ENCODE measurements at regions of chr3 and their contacts with region 1.

Region 1: GRCh38 chr3:31531992-31532586 is 636 bp upstream of the STT3B start:
- DNase-seq: peak; percentile 99
- H3K4me3 ChIP-seq: peak overlapping the region; percentile 76
- H3K4me3 Mint-ChIP-seq: peak overlapping the region in 6 of 7 donors; percentile 93 to 100 (median 96)
- H3K27ac ChIP-seq: peak overlapping the region; percentile 83
- H3K27ac Mint-ChIP-seq: peak overlapping the region; percentile 96 to 98 (median 96)
- H3K4me1 ChIP-seq: peaks cover 12% of the 10 kb centered on the region
- H3K4me1 Mint-ChIP-seq: peaks cover 28 to 38% (median 35%) of the 10 kb centered on the region in 3 donors
- H3K27me3 ChIP-seq: no peaks in the 10 kb centered on the region
- H3K27me3 Mint-ChIP-seq: peaks cover 0 to 4% of the 10 kb centered on the region in 2 donors

Region 2: DNA sequence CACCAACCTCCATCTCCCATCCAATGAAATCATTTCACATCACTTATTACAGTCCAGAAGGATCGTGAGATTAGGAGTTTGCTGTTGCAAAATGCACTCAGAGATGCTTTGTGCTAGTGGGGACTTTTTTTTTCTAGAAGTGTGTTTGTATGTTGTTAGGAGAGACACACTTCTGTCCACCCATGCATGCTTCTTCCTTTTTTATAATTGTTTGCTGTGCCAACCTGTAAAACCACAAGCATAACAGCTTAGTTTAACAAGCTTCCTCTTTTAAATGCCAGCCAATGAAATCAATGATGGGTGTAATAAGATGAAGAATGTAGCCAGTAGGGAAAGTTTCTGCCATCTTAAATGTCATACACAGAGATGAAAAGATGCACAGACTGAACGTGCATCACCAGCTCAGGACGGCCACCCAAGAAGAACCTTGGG is 304.9 kb before region 1 on chr3:
- CTCF ChIA-PET with region 1: interaction called, 10 read pairs
- POLR2A ChIA-PET with region 1: interaction called, 21 read pairs
- DNase-seq: peak in 2 of 5 donors; percentile 50 to 71
- H3K4me3 ChIP-seq: peak overlapping the region; percentile 7
- H3K4me3 Mint-ChIP-seq: peak overlapping the region; percentile 8 to 82 (median 73)
- H3K27ac ChIP-seq: peak overlapping the region; percentile 40
- H3K27ac Mint-ChIP-seq: peak overlapping the region; percentile 83 to 97 (median 89)
- H3K4me1 ChIP-seq: peaks cover 91% of the 10 kb centered on the region
- H3K4me1 Mint-ChIP-seq: peaks cover 77 to 91% (median 88%) of the 10 kb centered on the region in 3 donors
- H3K27me3 ChIP-seq: no peaks in the 10 kb centered on the region
- H3K27me3 Mint-ChIP-seq: no peaks in the 10 kb centered on the region

Region 3: DNA sequence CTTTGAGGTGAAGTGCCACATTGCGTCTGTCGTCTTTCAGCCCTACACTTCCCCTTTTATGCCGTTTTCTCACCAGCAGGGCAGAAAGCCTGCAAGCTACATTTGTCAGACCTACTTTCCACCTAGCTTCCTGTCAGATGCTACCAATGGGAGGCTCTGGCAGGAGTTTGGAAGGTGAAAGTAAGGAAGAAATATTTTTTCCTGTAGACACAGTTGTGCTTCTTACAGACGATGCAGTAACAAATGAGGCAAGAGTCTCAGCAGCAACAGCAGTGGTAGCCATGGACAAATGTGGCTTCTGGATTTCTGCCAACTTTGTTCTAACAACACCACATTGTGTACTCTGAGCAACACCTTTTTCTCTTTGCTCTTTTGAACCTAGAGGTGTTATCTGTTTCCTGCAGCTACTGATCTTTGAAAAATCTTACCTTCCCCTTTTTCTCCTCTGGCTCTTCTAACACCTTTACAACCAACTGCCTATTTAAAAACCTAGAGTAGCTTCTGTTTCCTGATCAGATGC is 70.0 kb before region 1 on chr3:
- CTCF ChIA-PET with region 1: interaction called, 46 read pairs
- POLR2A ChIA-PET with region 1: interaction called, 32 read pairs
- DNase-seq: peak; percentile 11 to 88 (median 78)
- H3K4me3 ChIP-seq: peak overlapping the region; percentile 32
- H3K4me3 Mint-ChIP-seq: peak overlapping the region; percentile 55 to 82 (median 76)
- H3K27ac ChIP-seq: no peak overlapping the region
- H3K27ac Mint-ChIP-seq: peak overlapping the region; percentile 87 to 95 (median 92)
- H3K4me1 ChIP-seq: peaks cover 59% of the 10 kb centered on the region
- H3K4me1 Mint-ChIP-seq: peaks cover 52 to 73% (median 68%) of the 10 kb centered on the region in 3 donors
- H3K27me3 ChIP-seq: no peaks in the 10 kb centered on the region
- H3K27me3 Mint-ChIP-seq: no peaks in the 10 kb centered on the region

Region 4: DNA sequence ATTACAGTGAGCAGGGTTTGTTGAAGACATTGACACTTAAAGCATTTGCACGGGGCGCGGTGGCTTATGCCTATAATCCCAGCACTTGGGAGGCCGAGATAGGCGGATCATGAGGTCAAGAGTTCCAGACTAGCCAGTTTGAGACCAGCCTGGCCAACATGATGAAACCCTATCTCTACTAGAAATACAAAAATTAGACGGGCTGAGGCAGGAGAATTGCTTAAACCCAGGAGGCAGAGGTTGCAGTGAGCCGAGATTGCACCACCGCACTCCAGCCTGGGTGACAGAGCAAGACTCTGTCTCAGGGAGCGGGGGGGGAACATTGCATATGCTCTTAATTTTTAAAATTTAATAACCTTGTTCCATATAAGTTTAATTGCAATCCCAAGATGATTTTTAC is 12.5 kb after region 1 on chr3:
- CTCF ChIA-PET with region 1: interaction called, 23 read pairs
- POLR2A ChIA-PET with region 1: interaction called, 5 read pairs
- DNase-seq: no peak
- H3K4me3 ChIP-seq: no peak overlapping the region
- H3K4me3 Mint-ChIP-seq: peak overlapping the region in 5 of 7 donors; percentile 11 to 46 (median 18)
- H3K27ac ChIP-seq: no peak overlapping the region
- H3K27ac Mint-ChIP-seq: peak overlapping the region in 4 of 8 donors; percentile 19 to 59 (median 33)
- H3K4me1 ChIP-seq: peaks cover 49% of the 10 kb centered on the region
- H3K4me1 Mint-ChIP-seq: peaks cover 80 to 94% (median 92%) of the 10 kb centered on the region in 3 donors
- H3K27me3 ChIP-seq: no peaks in the 10 kb centered on the region
- H3K27me3 Mint-ChIP-seq: no peaks in the 10 kb centered on the region

Region 5: DNA sequence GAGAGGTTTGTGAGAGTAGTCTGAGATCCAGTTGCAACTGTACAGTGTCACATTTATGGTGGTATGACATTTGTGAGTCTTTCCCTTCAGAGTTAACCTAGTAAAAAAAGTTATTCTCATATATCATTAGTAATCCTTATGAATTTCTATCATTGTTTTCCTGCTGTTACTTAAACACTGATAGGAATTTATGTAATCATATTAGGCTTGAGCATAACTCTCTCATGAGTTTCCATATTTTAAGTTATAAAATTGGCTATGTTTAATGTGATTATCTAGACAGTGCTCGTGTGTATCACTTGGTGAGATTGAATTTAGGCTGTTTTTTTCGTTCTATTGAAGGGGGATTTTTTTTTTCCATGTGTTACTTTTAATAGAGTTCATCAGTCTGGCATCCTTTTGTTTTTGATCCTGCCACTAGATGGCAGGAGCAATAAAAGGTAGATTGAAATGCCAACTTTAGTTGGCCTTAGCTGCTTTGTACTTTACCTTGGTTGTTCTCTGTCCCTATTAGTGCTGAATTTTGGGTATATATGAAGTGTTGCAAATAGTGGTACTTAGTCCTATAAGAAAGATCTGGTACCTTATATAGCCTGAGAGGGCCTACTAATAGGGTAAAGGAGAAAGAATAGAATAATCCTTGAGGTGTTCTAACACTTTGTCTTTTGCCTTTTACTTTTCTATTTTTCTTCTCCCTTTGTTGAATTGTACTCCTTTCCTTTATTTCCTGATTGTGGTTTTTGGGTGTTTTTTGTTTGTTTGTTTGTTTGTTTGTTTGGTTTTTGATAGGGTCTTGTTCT is 18.6 kb after region 1 on chr3:
- CTCF ChIA-PET with region 1: interaction called, 23 read pairs
- POLR2A ChIA-PET with region 1: interaction called, 5 read pairs
- DNase-seq: peak in 2 of 5 donors; percentile 21 to 31
- H3K4me3 ChIP-seq: no peak overlapping the region
- H3K4me3 Mint-ChIP-seq: peak overlapping the region in 6 of 7 donors; percentile 1 to 54 (median 11)
- H3K27ac ChIP-seq: no peak overlapping the region
- H3K27ac Mint-ChIP-seq: peak overlapping the region in 7 of 8 donors; percentile 1 to 94 (median 20)
- H3K4me1 ChIP-seq: peaks cover 38% of the 10 kb centered on the region
- H3K4me1 Mint-ChIP-seq: peaks cover 73 to 93% (median 91%) of the 10 kb centered on the region in 3 donors
- H3K27me3 ChIP-seq: no peaks in the 10 kb centered on the region
- H3K27me3 Mint-ChIP-seq: no peaks in the 10 kb centered on the region

Region 6: DNA sequence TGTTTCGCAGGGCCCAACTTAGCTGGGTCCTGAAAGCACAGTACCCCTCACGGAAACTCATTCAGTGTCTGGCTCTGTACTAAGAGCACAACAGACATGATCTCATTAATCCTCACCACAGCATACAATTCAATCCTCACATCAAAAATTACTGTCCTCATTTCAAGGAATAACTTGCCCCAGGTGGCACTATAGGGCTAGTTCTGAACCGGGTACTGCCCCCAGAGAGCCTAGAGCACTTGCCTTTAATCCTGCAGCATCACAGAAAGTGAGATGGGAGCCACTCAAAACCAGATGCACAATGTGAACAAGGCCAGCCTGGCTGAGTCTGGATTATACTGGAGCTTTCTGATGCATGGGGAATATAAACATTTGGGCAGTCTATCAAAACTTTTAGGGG is 326.4 kb after region 1 on chr3:
- CTCF ChIA-PET with region 1: no interaction called
- POLR2A ChIA-PET with region 1: no interaction called
- DNase-seq: no peak
- H3K4me3 ChIP-seq: no peak overlapping the region
- H3K4me3 Mint-ChIP-seq: no peak overlapping the region
- H3K27ac ChIP-seq: no peak overlapping the region
- H3K27ac Mint-ChIP-seq: no peak overlapping the region
- H3K4me1 ChIP-seq: no peaks in the 10 kb centered on the region
- H3K4me1 Mint-ChIP-seq: no peaks in the 10 kb centered on the region
- H3K27me3 ChIP-seq: no peaks in the 10 kb centered on the region
- H3K27me3 Mint-ChIP-seq: peaks cover 9 to 22% of the 10 kb centered on the region in 2 donors

Measured in CD8-positive, alpha-beta memory T cell (primary cell).